ENCODE measurements at regions of chr6 and their contacts with region 1.

Region 1: DNA sequence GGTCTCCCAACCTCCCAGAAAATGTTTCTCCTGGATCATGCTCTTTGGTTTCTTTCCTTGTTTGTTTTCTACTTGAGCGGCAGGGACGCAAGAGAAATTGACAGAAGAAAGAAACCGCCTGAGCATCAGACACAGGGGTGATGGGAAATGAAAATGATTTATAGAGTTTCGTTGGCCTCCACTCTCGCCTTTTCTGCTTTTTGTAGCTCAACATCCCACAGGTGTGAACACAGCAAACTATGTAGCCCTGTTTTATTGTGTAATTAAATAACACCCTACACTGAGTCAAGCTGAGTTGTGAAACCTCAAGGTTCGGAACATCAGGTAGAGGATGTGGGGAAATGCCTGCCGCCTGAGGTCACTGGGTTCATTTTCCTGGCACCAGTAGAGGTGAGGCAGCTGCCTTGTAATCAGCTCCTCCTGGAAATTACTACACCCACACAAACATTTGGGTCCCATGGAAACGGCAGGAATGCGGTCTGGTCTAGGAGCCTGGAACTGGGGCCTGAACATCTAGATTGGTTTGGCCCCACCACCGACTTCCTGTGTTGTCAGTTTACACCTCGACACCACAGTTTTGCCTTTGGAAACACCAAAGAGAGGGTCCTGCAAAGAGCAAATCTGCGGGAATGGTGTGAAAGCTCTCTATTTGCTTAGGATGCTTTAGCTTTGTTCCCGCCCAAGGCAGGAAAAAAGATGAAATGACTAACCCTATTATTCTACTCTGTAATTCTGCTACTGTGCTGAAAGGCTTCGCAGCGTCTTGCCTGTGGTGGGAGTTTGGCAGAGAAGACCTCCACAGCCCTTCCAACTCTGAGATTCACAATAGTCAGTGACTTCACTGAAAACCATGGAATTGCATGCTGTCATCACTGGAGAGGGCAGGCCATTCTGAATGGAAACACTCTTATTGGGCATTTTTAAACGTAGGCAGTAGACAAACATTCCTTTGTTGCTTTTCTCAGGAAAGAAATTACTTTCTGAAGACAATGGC is 53.0 kb downstream of the ADAT2 start:
- DNase-seq: peak; percentile 64 to 90
- H3K4me3 ChIP-seq: no peak overlapping the region
- H3K27ac ChIP-seq: peak overlapping the region; percentile 51 to 63
- H3K4me1 ChIP-seq: peaks cover 5 to 23% of the 10 kb centered on the region in 2 donors
- H3K27me3 ChIP-seq: no peaks in the 10 kb centered on the region
- CTCF ChIP-seq: no peak

Region 2: DNA sequence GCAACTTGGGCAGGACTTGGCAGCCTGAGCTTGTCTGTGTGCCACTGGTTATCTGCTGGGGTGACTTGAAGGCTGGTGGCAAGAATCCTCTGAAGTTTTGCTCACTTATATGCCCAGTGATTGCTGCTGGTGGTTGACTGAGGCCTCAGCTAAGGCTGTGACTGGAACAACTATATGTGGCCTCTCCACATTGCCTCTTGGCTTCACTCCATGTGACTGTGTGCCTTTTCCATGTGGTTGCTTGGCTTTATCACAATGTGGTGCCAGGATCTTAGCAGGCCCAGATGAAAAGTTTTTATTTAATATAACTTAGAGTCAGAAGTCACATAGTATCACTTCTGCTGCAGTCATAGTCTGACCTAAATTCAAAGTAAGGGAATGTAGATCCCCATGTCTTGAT is 51.5 kb before region 1 on chr6:
- intact Hi-C with region 1: loop called (anchors 5 kb)
- DNase-seq: no peak
- H3K4me3 ChIP-seq: no peak overlapping the region
- H3K27ac ChIP-seq: no peak overlapping the region
- H3K4me1 ChIP-seq: no peaks in the 10 kb centered on the region
- H3K27me3 ChIP-seq: no peaks in the 10 kb centered on the region
- CTCF ChIP-seq: no peak

Region 3: GRCh38 chr6:143357561-143358255 is 39.8 kb before region 1 on chr6:
- intact Hi-C with region 1: no loop called
- DNase-seq: no peak
- H3K4me3 ChIP-seq: no peak overlapping the region
- H3K27ac ChIP-seq: no peak overlapping the region
- H3K4me1 ChIP-seq: no peaks in the 10 kb centered on the region
- H3K27me3 ChIP-seq: no peaks in the 10 kb centered on the region
- CTCF ChIP-seq: no peak

Region 4: DNA sequence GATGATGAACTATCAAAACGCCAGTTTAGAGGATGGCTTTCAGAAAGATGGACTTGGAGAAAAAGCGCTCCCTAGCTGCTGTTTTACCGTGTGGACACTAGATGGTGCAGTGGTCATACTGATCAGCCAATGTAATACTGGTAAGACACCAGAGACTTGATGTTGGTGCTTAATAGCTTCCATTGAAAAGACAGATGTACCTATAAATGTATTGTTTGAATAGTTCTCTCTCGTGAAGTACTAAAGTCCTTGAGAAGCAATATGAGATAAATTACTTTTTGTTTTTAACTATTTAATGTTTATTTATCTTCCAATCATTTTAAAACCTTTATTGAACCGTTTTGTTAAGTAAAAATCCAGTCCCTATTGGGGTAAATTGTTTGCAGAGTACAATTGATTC is 177.9 kb after region 1 on chr6:
- intact Hi-C with region 1: no loop called
- DNase-seq: peak in 1 of 2 donors; percentile 72
- H3K4me3 ChIP-seq: no peak overlapping the region
- H3K27ac ChIP-seq: no peak overlapping the region
- H3K4me1 ChIP-seq: peaks cover 3 to 5% of the 10 kb centered on the region in 2 donors
- H3K27me3 ChIP-seq: no peaks in the 10 kb centered on the region
- CTCF ChIP-seq: peak; percentile 81 to 90 (median 90)

Region 5: DNA sequence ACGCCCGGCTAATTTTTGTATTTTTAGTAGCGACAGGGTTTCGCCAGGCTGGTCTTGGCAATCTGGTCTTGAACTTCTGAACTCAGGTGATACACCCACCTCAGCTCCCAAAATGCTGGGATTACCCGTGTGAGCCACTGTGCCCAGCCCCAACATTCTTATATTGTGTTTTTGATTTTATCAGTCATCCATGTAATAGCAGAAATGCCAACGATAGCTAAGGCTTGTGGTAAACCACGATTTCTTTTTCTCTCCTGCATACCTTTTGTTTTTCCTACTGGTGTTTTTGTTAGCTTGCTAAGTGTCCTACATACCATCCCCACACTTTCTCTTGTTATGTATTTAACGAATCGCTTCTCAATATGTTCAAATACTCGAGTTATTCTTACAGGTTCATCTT is 292.3 kb after region 1 on chr6:
- intact Hi-C with region 1: loop called (anchors 10 kb)
- DNase-seq: no peak
- H3K4me3 ChIP-seq: no peak overlapping the region
- H3K27ac ChIP-seq: peak overlapping the region; percentile 77 to 84
- H3K4me1 ChIP-seq: peaks cover 9 to 54% of the 10 kb centered on the region in 2 donors
- H3K27me3 ChIP-seq: no peaks in the 10 kb centered on the region
- CTCF ChIP-seq: no peak